ENCODE measurements at regions of chr13 and their contacts with region 1.

Region 1: DNA sequence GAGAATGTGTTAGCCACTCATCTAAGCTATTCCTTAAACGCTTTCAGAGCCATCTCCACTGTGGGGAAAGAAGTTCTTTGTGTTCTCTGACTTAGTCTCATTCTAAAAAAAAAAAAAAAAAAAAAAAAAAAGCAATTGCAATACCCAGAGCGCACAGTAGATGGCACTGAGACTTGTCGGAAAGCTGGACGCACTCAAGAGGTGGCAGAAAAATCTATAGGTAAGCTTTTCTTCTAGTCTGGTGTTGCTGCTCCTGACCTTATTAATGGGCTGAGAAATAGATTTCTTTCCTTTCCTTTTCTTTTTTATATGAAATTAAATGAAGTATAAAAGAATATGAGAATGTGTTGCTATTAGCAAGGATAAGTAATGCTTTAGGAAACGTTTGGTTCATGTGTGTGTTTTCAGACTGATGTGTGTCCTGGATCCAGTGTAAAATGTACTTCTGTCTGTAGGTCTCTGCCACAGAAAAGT is 4.7 kb upstream of the GJB2 start:
- DNase-seq: no peak
- H3K4me3 ChIP-seq: no peak overlapping the region
- H3K27ac ChIP-seq: no peak overlapping the region
- H3K4me1 ChIP-seq: peaks cover 14 to 34% (median 24%) of the 10 kb centered on the region in 6 donors
- H3K27me3 ChIP-seq: peaks cover 23 to 56% (median 47%) of the 10 kb centered on the region in 7 donors
- CTCF ChIP-seq: peak; percentile 25 to 72 (median 55)
- POLR2A ChIP-seq: no peak

Region 2: GRCh38 chr13:20475927-20476691 is 278.7 kb after region 1 on chr13:
- intact Hi-C with region 1: no loop called
- DNase-seq: peak; percentile 90
- H3K4me3 ChIP-seq: peak overlapping the region in 2 of 8 donors; percentile 14 to 60
- H3K27ac ChIP-seq: peak overlapping the region in 7 of 8 donors; percentile 59 to 87 (median 75)
- H3K4me1 ChIP-seq: peaks cover 0 to 26% (median 16%) of the 10 kb centered on the region in 6 donors
- H3K27me3 ChIP-seq: no peaks in the 10 kb centered on the region
- CTCF ChIP-seq: no peak
- POLR2A ChIP-seq: no peak

Region 3: DNA sequence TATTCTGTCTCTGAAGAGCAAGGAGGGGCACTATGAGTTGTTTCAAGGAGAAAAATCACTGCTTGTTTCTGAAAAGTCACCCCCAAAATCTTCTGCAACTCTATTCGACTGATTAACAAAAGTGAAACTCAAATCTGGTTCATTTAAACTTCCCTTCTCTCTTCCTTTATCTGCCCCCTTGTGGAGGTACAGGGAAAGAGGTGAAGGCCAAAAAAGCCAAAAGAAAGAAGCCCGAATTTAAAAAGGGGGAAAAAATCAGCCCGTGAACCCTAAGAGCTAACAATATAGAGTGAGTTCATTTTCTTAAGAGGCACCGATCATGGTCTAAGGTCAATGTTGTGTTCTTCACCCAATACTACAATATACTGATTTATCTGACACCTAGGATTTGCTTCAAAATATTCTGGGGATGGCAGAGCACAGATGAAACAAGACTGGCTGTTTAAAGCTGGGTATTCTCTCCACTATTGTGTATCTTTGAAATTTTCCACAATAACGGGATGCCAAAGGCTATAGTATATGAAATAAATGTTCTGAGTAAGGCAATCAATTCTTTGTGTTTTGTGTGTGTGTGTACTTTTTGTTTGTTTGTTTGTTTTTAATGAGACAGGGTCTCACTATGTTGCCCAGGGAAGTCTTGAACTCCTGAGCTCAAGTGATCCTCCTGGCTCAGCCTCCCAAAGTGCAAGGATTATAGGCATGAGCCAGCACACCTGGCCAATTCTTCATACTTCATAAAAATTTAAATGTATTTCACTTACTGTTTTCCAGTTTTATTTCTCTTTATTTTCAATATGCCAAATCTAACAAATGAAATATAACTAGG is 631.4 kb after region 1 on chr13:
- intact Hi-C with region 1: loop called (anchors 5 kb)
- DNase-seq: no peak
- H3K4me3 ChIP-seq: peak overlapping the region in 2 of 8 donors; percentile 12 to 40
- H3K27ac ChIP-seq: peak overlapping the region in 4 of 8 donors; percentile 18 to 46 (median 33)
- H3K4me1 ChIP-seq: peaks cover 0 to 24% (median 10%) of the 10 kb centered on the region in 6 donors
- H3K27me3 ChIP-seq: no peaks in the 10 kb centered on the region
- CTCF ChIP-seq: peak; percentile 61 to 87 (median 80)
- POLR2A ChIP-seq: no peak

Region 4: GRCh38 chr13:20924758-20925394 is 727.5 kb after region 1 on chr13:
- intact Hi-C with region 1: loop called (anchors 10 kb)
- DNase-seq: peak; percentile 75
- H3K4me3 ChIP-seq: no peak overlapping the region
- H3K27ac ChIP-seq: no peak overlapping the region
- H3K4me1 ChIP-seq: no peaks in the 10 kb centered on the region
- H3K27me3 ChIP-seq: no peaks in the 10 kb centered on the region
- CTCF ChIP-seq: peak; percentile 32 to 72 (median 62)
- POLR2A ChIP-seq: no peak

Measured in spleen (tissue), 13 donors.